Activated T-helper 2 cell treated with anti-CD3 and anti-CD28 coated beads, Interferon-gamma antibody, Interleukin-2, Interleukin-4, amounts not matched to agents 10 μg/mL and 5 μg/mL and 100 μg/mL, durations not matched to agents 14 hours and 24 hours and 36 hours (primary cell): ENCODE measurements at regions of chr2 and their contacts with region 1.

Region 1: GRCh38 chr2:171811245-171811628 is 82.8 kb downstream of the SLC25A12 start:
- DNase-seq: no peak
- H3K4me3 Mint-ChIP-seq: no peak overlapping the region
- H3K27ac Mint-ChIP-seq: no peak overlapping the region
- H3K4me1 Mint-ChIP-seq: peaks cover 1% of the 10 kb centered on the region
- H3K27me3 Mint-ChIP-seq: no peaks in the 10 kb centered on the region

Region 2: DNA sequence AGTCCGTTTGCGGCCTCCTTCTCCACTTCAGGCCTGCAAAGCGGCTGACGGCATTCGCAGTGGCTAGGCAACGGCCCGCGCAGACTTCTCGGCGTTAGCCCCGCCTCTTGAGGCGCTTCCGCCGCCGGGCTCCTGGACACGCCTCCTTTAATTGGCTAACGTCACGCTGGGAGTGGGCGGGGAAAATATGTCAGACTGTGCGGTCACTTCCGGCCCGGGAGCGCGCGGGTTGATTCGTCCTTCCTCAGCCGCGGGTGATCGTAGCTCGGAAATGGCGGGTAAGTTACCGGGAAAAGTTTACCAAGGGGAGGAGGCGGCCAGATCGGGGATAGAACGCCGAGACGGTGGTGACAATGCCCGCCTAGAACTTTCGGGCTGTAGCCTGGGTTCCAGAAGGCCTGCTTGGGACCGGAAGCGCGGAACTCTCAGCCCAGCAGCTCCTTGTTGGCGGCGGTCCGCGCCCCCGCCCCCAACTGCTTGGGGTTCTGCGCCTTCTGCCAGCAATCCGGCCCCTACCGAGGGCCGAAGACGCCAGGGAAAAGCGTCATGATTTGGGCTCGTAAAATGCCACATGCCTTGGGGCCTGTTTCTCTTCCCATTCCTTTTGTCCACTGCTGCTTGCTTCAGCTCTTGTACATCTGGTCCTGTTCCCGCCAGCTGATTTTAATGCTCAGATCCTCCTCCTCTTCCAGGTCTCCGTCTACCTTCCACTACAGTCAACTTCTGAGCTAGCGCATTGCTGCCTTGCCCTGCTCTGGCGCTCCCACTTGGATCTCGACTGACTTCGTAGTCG is 111.2 kb after region 1 on chr2 and contains the start of gene HAT1:
- intact Hi-C with region 1: loop called (anchors 10 kb)
- DNase-seq: peak; percentile 97
- H3K4me3 Mint-ChIP-seq: peak within 1 kb of the TSS; percentile 94
- H3K27ac Mint-ChIP-seq: peak within 1 kb of the TSS; percentile 96
- H3K4me1 Mint-ChIP-seq: peaks cover 33% of the 10 kb centered on the region
- H3K27me3 Mint-ChIP-seq: peaks cover 2% of the 10 kb centered on the region
- total RNA-seq, gene HAT1: 67.4 and 70.1 TPM in 2 replicates